ENCODE measurements at regions of chr4 and their contacts with region 1.

Region 1: GRCh38 chr4:80072744-80073472 is at the start of gene ANTXR2:
- DNase-seq: peak; percentile 64
- H3K4me3 Mint-ChIP-seq: peak within 1 kb of the TSS; percentile 84
- H3K27ac Mint-ChIP-seq: peak within 1 kb of the TSS; percentile 82
- H3K4me1 Mint-ChIP-seq: peaks cover 76% of the 10 kb centered on the region
- H3K27me3 Mint-ChIP-seq: peaks cover 2% of the 10 kb centered on the region
- total RNA-seq, gene ANTXR2: 0.50 to 0.79 TPM

Region 2: DNA sequence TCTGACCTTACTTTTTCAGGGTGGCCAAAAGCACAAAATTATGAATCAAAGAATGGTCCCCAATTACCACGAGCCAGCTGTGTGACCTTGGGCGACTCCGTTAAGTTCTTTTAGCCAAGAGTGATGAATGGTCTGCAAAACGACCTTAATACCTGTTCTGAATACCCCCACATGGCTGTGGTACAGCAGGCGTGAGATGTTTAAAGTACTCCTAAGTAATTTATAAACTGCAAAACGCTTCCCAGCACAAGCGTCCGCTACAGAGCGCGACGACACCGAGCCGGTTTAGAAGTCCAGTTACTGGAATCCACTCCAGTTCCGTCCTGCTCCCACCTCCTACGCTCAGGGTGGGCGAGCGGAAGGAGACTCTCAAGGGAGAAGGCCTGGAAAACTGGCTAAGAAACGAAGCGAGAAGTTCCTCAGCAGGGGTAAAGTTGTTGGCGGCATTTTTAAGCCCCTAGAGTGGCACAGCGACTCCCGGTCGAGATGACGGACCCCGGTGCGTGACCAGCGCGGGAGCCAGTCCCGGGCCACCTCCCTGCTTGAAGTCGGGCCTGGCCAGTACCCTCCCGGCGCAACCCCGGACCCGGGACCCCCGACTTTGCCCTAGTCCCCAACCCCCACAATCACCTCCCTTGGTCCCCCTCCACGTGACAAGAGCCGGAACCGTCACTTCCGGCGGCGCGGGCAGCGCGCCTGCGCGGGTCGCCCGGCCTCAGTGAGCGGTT is 1297.4 kb before region 1 on chr4:
- CTCF ChIA-PET with region 1: no interaction called
- intact Hi-C with region 1: loop called (anchors 10 kb)
- DNase-seq: peak; percentile 84
- H3K4me3 Mint-ChIP-seq: peak overlapping the region; percentile 90
- H3K27ac Mint-ChIP-seq: peak overlapping the region; percentile 95
- H3K4me1 Mint-ChIP-seq: peaks cover 17% of the 10 kb centered on the region
- H3K27me3 Mint-ChIP-seq: no peaks in the 10 kb centered on the region

Region 3: DNA sequence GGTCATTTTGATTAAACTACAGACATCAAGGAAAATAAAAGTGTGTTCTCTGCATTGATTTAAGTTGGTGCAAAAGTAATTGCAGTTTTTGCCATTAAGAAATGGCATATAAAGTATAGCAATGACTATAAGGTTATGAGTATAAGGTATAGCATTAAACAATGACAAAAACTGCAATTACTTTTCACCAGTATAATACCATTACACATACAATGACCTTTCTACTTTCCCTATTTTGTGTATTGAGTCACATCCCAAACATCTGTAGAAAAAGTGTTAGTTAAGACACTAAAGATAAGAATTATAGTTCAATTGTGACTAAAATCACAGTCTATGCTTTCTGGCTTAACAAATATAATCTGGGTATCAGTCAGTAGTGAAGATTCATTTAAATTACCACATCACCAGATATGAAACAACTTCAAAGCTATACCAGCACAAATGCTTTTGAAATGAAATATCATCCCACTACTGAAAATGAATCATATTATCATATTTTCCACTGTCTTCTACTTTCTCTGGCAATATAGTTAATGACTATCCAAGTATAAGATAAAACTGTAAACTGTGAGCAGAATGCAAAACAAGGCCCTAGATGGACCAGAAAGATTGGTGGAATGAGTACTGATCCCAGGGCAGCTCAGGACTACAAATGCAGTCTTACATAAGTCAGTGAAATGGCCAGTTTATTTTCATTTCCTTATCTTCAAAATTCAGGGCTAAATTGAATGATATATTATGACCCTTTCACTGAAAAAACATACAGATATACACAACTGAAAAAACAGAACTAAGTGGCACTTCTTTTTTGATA is 241.0 kb before region 1 on chr4:
- CTCF ChIA-PET with region 1: no interaction called
- intact Hi-C with region 1: loop called (anchors 1 kb)
- DNase-seq: no peak
- H3K4me3 Mint-ChIP-seq: no peak overlapping the region
- H3K27ac Mint-ChIP-seq: no peak overlapping the region
- H3K4me1 Mint-ChIP-seq: peaks cover 12% of the 10 kb centered on the region
- H3K27me3 Mint-ChIP-seq: peaks cover 8% of the 10 kb centered on the region

Region 4: GRCh38 chr4:79893456-79893855 is 179.5 kb before region 1 on chr4:
- CTCF ChIA-PET with region 1: no interaction called
- intact Hi-C with region 1: no loop called
- DNase-seq: no peak
- H3K4me3 Mint-ChIP-seq: no peak overlapping the region
- H3K27ac Mint-ChIP-seq: no peak overlapping the region
- H3K4me1 Mint-ChIP-seq: no peaks in the 10 kb centered on the region
- H3K27me3 Mint-ChIP-seq: peaks cover 8% of the 10 kb centered on the region

Region 5: DNA sequence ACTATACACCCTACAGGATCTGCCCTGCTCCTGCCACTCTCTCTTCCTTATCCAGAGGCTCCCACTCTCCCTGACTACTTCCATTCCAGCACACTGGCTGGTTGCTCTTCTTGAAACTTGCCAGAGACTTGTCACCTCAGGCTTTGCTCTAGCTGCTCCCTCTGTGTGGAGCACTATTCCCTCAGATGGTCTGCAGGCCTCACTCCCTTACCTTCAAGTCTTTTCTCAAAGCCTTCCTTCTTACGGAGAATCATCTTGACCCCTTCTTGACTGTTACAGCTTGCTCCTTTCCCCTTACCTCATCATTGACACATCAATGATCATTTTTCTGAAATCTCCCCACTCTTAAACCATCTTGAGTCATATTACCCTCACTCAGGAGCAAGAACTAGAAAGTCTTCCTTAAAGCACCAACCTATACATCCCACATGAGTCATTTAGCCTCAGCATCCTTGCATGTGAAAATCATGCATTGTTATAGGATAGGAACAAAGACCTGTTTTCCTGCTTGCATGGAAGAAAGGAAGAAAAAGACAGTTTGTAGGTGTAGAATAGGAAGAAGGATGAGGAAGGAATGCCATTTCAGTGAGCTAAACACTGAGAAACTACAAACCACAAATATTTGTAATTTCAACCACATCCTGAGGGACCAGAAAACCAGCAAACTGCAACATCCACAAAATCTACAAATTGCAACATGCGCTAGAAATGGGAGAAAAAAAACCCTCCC is 55.6 kb before region 1 on chr4:
- CTCF ChIA-PET with region 1: interaction called, 4 read pairs
- intact Hi-C with region 1: loop called (anchors 2 kb)
- DNase-seq: no peak
- H3K4me3 Mint-ChIP-seq: no peak overlapping the region
- H3K27ac Mint-ChIP-seq: no peak overlapping the region
- H3K4me1 Mint-ChIP-seq: no peaks in the 10 kb centered on the region
- H3K27me3 Mint-ChIP-seq: no peaks in the 10 kb centered on the region

Region 6: DNA sequence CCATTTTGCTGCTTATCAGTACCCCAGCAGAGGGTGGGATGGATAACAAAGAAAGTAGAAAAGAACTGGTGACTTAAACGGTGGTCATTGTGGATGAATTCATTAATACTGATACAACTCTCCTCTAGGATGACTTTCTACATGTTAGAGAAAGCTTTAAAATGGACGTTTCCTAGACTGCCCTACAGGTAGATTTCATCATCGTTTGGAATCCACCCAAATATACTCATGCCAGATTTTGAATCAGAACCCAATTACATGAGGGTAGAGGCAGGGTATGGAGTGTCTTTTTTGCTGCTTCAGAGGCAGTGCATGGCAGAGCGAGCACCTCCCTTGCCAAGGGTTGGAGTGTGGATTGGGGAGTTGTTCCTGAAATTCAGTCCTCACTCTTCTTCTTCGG is 13.4 kb after region 1 on chr4:
- CTCF ChIA-PET with region 1: no interaction called
- intact Hi-C with region 1: no loop called
- DNase-seq: no peak
- H3K4me3 Mint-ChIP-seq: no peak overlapping the region
- H3K27ac Mint-ChIP-seq: no peak overlapping the region
- H3K4me1 Mint-ChIP-seq: no peaks in the 10 kb centered on the region
- H3K27me3 Mint-ChIP-seq: peaks cover 6% of the 10 kb centered on the region

Region 7: DNA sequence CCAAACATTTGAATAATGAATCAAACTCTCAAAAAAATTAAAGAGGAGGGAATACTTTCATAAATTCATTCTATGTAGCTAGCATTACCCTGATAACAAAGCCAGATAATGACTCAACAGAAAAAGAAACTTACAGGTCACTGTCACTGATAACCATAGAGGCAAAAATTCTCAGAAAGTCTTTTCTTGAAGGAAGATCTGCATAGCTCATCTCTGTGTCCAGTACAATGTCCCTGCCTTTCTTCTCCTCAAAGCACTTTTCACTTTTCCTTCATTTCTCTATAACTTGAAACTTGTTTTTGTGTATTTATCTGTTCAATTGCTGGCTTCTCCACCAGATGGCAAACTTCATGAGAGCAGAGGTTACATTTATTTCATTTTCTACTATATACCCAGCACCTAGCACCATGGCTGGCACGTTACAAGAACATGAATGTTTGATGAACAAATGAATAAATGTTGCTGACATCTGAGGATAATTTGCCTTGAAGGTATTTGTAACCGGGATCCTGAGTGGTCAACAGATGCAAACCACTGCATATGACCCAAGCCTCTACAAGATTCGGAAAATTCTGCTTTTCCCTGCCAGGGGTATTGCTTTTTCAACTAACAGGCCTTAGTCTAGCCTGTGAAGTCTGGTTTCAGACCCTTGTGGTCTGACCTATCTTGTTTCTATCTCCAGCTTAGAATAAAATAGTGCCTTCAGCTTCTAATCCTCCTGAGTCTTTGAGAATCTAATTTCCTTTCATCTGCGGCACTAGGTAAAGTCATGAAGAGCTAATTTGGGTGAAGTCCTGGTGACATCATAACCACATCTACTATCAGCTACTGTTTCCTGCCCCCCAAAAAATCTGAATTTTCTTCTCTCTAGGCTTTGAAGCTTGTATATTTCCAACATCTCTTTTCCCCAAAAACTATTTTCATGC is 52.6 kb after region 1 on chr4:
- CTCF ChIA-PET with region 1: interaction called, 5 read pairs
- intact Hi-C with region 1: loop called (anchors 1 kb)
- DNase-seq: peak; percentile 39
- H3K4me3 Mint-ChIP-seq: no peak overlapping the region
- H3K27ac Mint-ChIP-seq: peak overlapping the region; percentile 17
- H3K4me1 Mint-ChIP-seq: peaks cover 49% of the 10 kb centered on the region
- H3K27me3 Mint-ChIP-seq: no peaks in the 10 kb centered on the region

Region 8: DNA sequence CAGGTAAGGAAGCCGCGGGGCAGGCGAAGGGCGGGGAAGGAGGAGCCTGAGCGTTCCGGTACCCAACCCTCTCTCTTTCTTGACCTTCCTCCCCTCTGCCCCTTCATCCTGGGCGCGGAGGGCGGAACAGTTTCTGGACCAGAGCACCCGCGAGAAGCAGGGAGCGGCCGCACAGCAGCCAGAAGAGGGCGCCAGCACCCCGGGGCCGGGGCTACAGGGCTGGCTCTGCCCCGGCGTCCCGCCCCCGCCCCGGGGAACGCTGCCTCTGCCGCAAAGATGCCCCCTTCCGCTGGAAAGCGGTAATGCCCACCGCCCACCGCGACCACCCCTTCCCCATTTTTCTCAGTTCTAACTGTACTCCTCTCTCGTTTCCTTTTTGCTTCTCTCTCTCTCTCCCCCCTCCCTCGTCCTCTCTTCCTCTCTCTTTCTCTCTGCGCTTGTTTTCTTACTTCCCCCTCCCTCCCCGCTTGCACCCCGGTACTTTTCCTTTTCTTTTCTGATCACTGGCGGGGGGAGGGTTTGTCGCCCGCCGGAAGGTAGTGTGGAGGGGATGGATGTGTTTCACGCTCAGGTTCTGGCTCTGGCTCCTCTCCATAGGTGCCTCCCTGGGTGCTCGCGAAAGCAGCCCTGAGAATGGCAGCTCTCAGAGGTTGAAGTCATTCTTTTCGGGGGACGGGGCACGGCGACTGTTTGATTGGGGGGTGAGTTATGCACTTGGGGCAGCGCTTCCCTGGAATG is 111.3 kb after region 1 on chr4:
- CTCF ChIA-PET with region 1: interaction called, 9 read pairs
- intact Hi-C with region 1: loop called (anchors 1 kb)
- DNase-seq: peak; percentile 90
- H3K4me3 Mint-ChIP-seq: peak overlapping the region; percentile 97
- H3K27ac Mint-ChIP-seq: peak overlapping the region; percentile 70
- H3K4me1 Mint-ChIP-seq: peaks cover 46% of the 10 kb centered on the region
- H3K27me3 Mint-ChIP-seq: peaks cover 11% of the 10 kb centered on the region

Measured in activated naive CD4-positive, alpha-beta T cell treated with anti-CD3 and anti-CD28 coated beads for 36 hours (primary cell).